ENCODE measurements at regions of chr9 and their contacts with region 1.

Region 1: DNA sequence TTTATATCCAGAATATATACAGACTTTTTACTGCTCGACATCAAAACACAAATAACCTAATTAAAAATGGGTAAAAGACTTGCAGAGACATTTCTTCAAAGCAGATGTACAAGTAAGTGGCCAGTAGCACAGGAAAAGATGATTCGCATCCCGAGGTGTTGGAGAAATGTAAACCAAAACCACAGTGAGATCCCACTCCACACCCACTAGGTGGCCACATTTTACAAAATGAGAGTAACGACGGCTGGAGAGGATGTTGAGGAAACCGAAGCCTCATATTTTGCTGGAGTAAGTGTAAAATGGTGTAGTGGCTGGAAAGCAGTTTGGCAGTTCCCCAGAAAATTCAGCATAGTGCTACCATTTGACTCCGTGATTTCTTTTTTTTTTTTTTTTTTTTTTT is 21.2 kb upstream of the GBGT1 start:
- ATAC-seq: peak; percentile 40 to 85 (median 72)
- H3K4me3 ChIP-seq: no peak overlapping the region
- H3K27ac ChIP-seq: no peak overlapping the region
- H3K4me1 ChIP-seq: peaks cover 0 to 2% of the 10 kb centered on the region in 2 donors

Region 2: DNA sequence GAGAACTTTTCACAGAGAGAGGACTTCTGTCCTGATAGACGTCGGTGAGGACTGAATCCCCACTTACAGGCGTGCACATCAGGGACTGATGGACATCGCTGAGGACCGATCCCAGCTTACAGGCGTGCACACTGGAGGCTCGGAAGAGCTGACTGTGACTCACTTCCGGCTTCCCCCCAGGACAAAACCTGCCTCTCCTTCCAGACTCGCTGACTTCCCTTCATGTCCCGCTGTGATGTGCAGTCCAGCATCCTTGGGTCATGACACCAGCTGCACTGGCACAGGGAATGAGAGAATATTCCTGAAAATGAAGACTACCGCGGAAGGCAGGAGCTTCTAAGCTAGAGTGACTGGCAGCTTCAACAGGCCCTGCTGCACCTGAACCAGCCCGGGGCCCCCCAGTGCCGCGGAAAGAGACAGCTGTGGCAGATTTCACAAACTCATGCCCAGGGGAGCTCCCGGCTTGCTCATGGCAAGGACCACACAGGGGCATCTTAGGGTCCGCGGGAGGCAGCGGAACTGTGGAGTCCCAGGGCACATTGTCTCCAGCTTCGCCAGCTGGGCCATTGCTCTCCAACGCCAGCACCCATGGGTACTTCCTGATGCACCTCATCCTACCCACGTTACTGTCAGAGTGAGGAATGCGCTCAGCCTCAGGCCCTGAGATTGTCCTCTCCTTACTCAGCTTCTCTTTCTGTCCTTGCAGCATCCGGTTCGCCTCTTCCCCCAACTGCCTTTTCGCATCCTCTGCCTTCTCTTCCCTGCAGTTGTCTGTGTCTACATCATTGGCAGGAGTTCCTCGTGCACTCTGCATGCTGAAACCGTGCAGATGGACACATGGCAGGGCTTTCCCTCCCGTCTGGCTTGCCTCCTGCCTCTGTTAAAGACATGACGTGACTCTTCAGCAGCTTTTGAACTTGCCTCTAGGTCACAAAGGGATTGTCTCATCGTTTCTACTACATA is 121.6 kb after region 1 on chr9:
- in situ Hi-C with region 1: no loop called
- ATAC-seq: peak in 2 of 8 experiments; percentile 50 to 71
- H3K4me3 ChIP-seq: no peak overlapping the region
- H3K27ac ChIP-seq: no peak overlapping the region
- H3K4me1 ChIP-seq: no peaks in the 10 kb centered on the region

Region 3: DNA sequence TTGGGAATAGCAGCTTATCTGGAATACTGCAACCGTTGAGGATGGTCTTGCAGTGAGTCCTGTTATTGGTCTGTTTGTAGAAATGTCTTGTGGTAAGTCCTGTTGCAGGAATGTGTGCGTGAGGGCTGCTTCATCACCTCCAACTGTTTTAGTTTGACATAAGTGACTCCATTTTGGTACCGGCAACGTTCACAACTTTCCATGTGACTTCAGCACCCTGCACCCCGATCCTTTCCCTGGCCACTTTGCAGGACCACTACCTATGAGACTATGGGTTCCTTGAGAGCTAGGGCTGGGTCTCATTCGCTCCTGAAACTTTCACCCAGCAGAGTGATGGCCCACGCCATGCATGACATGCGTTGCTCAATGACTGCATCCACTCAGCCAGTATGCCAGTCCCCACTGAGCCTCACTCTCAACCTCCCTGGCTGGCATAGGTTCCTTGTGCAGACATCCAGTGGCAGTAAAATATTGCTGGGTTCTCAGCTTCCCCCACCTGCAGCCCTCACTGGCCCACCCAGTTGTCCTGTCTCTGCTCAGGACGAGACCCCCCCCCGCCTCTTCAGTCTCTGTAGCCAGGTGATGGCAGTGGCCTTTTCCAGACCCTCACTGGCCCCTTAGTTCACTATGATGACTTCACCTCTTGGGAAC is 143.0 kb after region 1 on chr9:
- in situ Hi-C with region 1: loop called in 4 of 9 experiments (anchors 10 to 25 kb)
- ATAC-seq: no peak
- H3K4me3 ChIP-seq: no peak overlapping the region
- H3K27ac ChIP-seq: no peak overlapping the region
- H3K4me1 ChIP-seq: no peaks in the 10 kb centered on the region

Region 4: GRCh38 chr9:133347985-133348717 is 163.2 kb after region 1 on chr9 and contains the starts of genes MED22 and RPL7A:
- in situ Hi-C with region 1: loop called in 2 of 9 experiments (anchors 25 kb)
- ATAC-seq: peak; percentile 62 to 86 (median 80)
- H3K4me3 ChIP-seq: peak within 1 kb of the TSS; percentile 67 to 97 (median 92)
- H3K27ac ChIP-seq: peak within 1 kb of the TSS; percentile 90 to 96
- H3K4me1 ChIP-seq: peaks cover 9 to 18% of the 10 kb centered on the region in 2 donors
- total RNA-seq, gene MED22: 14.2 to 36.9 (median 20.4) TPM
- total RNA-seq, gene RPL7A: 2,000 to 3,318 (median 3,013) TPM